ENCODE measurements at regions of chr1 and their contacts with region 1.

Region 1: GRCh38 chr1:219081943-219082925 is 91.4 kb upstream of the LYPLAL1 start:
- DNase-seq: no peak
- H3K4me3 ChIP-seq: no peak overlapping the region
- CTCF ChIP-seq: no peak

Region 2: GRCh38 chr1:219066631-219067349 is 15.4 kb before region 1 on chr1:
- CTCF ChIA-PET with region 1: interaction called, 26 read pairs
- POLR2A ChIA-PET with region 1: no interaction called
- DNase-seq: peak; percentile 31
- H3K4me3 ChIP-seq: no peak overlapping the region
- CTCF ChIP-seq: peak; percentile 16

Region 3: DNA sequence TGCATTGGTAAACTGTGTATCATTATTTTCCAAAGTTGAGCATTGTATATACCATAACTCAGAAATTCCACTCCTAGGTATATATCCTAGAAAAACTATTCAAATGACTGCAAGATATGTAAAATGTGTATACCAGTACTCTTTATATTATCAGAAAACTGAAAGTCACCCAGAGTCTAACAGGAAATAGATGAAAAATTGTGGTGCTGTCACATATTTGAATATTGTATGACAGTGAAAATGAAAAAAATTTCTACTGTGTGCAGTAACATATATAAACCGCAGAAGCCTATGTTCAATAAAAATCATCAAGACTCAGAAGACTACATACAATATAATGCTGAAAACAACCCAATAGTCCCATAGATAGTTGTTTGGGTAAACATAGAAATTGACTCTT is 17.1 kb after region 1 on chr1:
- CTCF ChIA-PET with region 1: no interaction called
- POLR2A ChIA-PET with region 1: no interaction called
- DNase-seq: no peak
- H3K4me3 ChIP-seq: no peak overlapping the region
- CTCF ChIP-seq: no peak

Measured in AG04449 (cell line).